ENCODE measurements at regions of chr7 and their contacts with region 1.

Region 1: GRCh38 chr7:116953727-116954442 is 584 bp downstream of the ST7 start:
- DNase-seq: peak; percentile 84 to 90 (median 84)
- ATAC-seq: peak; percentile 59
- H3K4me3 ChIP-seq: peak overlapping the region; percentile 79
- H3K27ac ChIP-seq: peak overlapping the region; percentile 95
- H3K4me1 ChIP-seq: peaks cover 26 to 60% of the 10 kb centered on the region in 2 experiments
- H3K27me3 ChIP-seq: no peaks in the 10 kb centered on the region
- CTCF ChIP-seq: peak in 1 of 3 experiments; percentile 7; a peak in 1 of 6 replicates
- EP300 ChIP-seq: peak; percentile 60
- POLR2A ChIP-seq: peak; percentile 70
- RAD21 ChIP-seq: no peak

Region 2: GRCh38 chr7:116499168-116500077 is 454.5 kb before region 1 on chr7 and contains the start of gene CAV2:
- CTCF ChIA-PET with region 1: no interaction called
- POLR2A ChIA-PET with region 1: no interaction called
- in situ Hi-C with region 1: no loop called
- intact Hi-C with region 1: loop called (anchors 10 kb)
- DNase-seq: peak; percentile 88 to 96 (median 93)
- ATAC-seq: peak; percentile 85
- H3K4me3 ChIP-seq: peak within 1 kb of the TSS; percentile 53
- H3K27ac ChIP-seq: peak within 1 kb of the TSS; percentile 73
- H3K4me1 ChIP-seq: peaks cover 25 to 38% of the 10 kb centered on the region in 2 experiments
- H3K27me3 ChIP-seq: no peaks in the 10 kb centered on the region
- CTCF ChIP-seq: no peak
- EP300 ChIP-seq: no peak
- POLR2A ChIP-seq: peak; percentile 69
- RAD21 ChIP-seq: no peak
- polyA plus RNA-seq, gene CAV2: 16.1 to 16.5 TPM

Region 3: GRCh38 chr7:116970238-116970910 is 16.5 kb after region 1 on chr7:
- CTCF ChIA-PET with region 1: no interaction called
- POLR2A ChIA-PET with region 1: interaction called, 40 read pairs
- in situ Hi-C with region 1: no loop called
- intact Hi-C with region 1: no loop called
- DNase-seq: peak in 1 of 4 experiments; percentile 37
- ATAC-seq: peak; percentile 48
- H3K4me3 ChIP-seq: no peak overlapping the region
- H3K27ac ChIP-seq: peak overlapping the region; percentile 50; the same call in 2 of the 3 replicates
- H3K4me1 ChIP-seq: peaks cover 12 to 25% of the 10 kb centered on the region in 2 experiments
- H3K27me3 ChIP-seq: no peaks in the 10 kb centered on the region
- CTCF ChIP-seq: no peak
- EP300 ChIP-seq: no peak
- POLR2A ChIP-seq: no peak
- RAD21 ChIP-seq: no peak

Region 4: DNA sequence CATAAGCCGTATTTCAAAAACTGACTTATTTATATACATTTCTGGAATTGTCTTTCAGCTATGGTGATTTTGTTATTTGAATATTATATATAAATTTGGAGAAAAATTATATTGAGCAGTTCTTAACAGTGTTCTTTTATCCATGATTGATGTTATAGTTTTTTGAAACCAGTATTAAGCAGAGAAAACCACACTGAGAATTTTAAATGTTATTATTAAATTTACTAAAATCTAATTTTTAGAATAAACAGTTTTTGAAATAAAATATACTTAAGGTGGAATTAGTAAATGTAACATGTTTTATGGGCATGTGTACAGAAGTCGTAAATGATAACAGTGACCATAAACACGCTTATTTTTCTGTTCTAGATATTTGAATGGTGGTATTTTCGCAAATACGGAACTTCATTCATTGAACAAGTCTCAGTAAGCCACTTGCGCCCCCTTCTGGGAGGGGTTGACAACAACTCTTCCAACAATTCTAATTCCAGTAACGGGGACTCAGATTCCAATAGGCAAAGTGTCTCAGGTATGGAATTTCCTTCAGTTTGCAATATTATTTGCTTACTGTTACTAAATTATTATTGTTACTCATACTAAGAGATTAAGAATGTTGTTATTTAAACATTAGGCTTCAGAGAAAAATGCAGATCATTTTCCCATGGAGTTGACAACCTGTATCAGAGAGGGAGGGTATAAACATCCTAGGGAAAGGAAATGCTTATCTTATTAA is 165.5 kb after region 1 on chr7:
- CTCF ChIA-PET with region 1: interaction called, 11 read pairs
- POLR2A ChIA-PET with region 1: interaction called, 3 read pairs
- in situ Hi-C with region 1: no loop called
- intact Hi-C with region 1: no loop called
- DNase-seq: peak; percentile 60 to 94 (median 66)
- ATAC-seq: peak; percentile 82
- H3K4me3 ChIP-seq: no peak overlapping the region
- H3K27ac ChIP-seq: no peak overlapping the region
- H3K4me1 ChIP-seq: peaks cover 0 to 8% of the 10 kb centered on the region in 2 experiments; a peak in 3 of 5 replicates
- H3K27me3 ChIP-seq: no peaks in the 10 kb centered on the region
- CTCF ChIP-seq: peak; percentile 90 to 98 (median 92)
- EP300 ChIP-seq: 0 out of 2 replicates have a peak, but pooled peaks have one; percentile 2
- POLR2A ChIP-seq: no peak
- RAD21 ChIP-seq: peak; percentile 99

Region 5: GRCh38 chr7:118183786-118184564 is 1230.1 kb after region 1 on chr7 and contains the start of gene LSM8:
- CTCF ChIA-PET with region 1: no interaction called
- POLR2A ChIA-PET with region 1: no interaction called
- in situ Hi-C with region 1: loop called (anchors 25 kb)
- intact Hi-C with region 1: loop called (anchors 10 kb)
- DNase-seq: peak; percentile 93 to 100 (median 95)
- ATAC-seq: peak; percentile 95
- H3K4me3 ChIP-seq: peak within 1 kb of the TSS; percentile 68
- H3K27ac ChIP-seq: peak within 1 kb of the TSS; percentile 90
- H3K4me1 ChIP-seq: peaks cover 4 to 7% of the 10 kb centered on the region in 2 experiments; a peak in 2 of 5 replicates
- H3K27me3 ChIP-seq: no peaks in the 10 kb centered on the region
- CTCF ChIP-seq: peak in 1 of 3 experiments; percentile 11; a peak in 1 of 6 replicates
- EP300 ChIP-seq: no peak
- POLR2A ChIP-seq: peak; percentile 99
- RAD21 ChIP-seq: no peak
- polyA plus RNA-seq, gene LSM8: 192 to 243 TPM